ENCODE measurements at regions of chr19 and their contacts with region 1.

Region 1: GRCh38 chr19:48255376-48256303 is at the start of gene CARD8:
- DNase-seq: peak; percentile 95
- ATAC-seq: peak; percentile 76
- H3K4me3 Mint-ChIP-seq: peak within 1 kb of the TSS; percentile 97
- H3K27ac Mint-ChIP-seq: peak within 1 kb of the TSS; percentile 100
- H3K4me1 Mint-ChIP-seq: peaks cover 66% of the 10 kb centered on the region
- H3K27me3 Mint-ChIP-seq: no peaks in the 10 kb centered on the region
- total RNA-seq, gene CARD8: 182 to 219 TPM

Region 2: DNA sequence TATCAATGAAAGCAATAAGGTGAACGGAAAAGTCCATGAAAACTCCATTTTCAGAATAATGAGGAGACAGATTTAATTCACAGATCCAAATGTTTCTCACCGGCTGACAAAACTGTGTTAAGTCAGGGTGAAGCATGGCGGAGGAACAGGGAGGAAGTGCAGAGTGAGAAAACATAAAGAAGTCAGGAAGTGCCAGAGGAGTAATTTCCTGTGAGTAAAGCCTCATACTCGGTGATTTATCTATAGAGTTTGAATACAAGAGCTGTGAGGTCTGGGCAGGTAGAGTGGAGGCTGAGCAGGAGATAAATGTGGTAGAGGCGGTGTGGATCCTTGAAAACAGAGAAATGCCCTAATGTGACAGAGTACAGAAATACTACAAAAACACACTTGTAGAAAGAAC is 11.4 kb before region 1 on chr19:
- CTCF ChIA-PET with region 1: interaction called, 23 read pairs
- DNase-seq: peak; percentile 60
- ATAC-seq: peak; percentile 85
- H3K4me3 Mint-ChIP-seq: peak overlapping the region; percentile 68
- H3K27ac Mint-ChIP-seq: peak overlapping the region; percentile 85
- H3K4me1 Mint-ChIP-seq: peaks cover 59% of the 10 kb centered on the region
- H3K27me3 Mint-ChIP-seq: no peaks in the 10 kb centered on the region